Activated CD8-positive, alpha-beta T cell treated with anti-CD3 and anti-CD28 coated beads for 36 hours (primary cell): ENCODE measurements at regions of chr1 and their contacts with region 1.

Region 1: GRCh38 chr1:64956733-64957441 is 9.5 kb downstream of the JAK1 start:
- DNase-seq: peak; percentile 78
- ATAC-seq: peak; percentile 83
- H3K4me3 Mint-ChIP-seq: no peak overlapping the region
- H3K27ac Mint-ChIP-seq: no peak overlapping the region
- H3K4me1 Mint-ChIP-seq: peaks cover 59% of the 10 kb centered on the region
- H3K27me3 Mint-ChIP-seq: no peaks in the 10 kb centered on the region
- CTCF ChIP-seq: no peak

Region 2: GRCh38 chr1:64877151-64877550 is 79.7 kb before region 1 on chr1:
- CTCF ChIA-PET with region 1: interaction called, 5 read pairs
- POLR2A ChIA-PET with region 1: interaction called, 4 read pairs
- intact Hi-C with region 1: loop called (anchors 5 kb)
- DNase-seq: peak; percentile 34
- ATAC-seq: peak; percentile 84
- H3K4me3 Mint-ChIP-seq: no peak overlapping the region
- H3K27ac Mint-ChIP-seq: peak overlapping the region; percentile 22
- H3K4me1 Mint-ChIP-seq: peaks cover 51% of the 10 kb centered on the region
- H3K27me3 Mint-ChIP-seq: no peaks in the 10 kb centered on the region
- CTCF ChIP-seq: no peak